ENCODE measurements at regions of chr2 and their contacts with region 1.

Region 1: DNA sequence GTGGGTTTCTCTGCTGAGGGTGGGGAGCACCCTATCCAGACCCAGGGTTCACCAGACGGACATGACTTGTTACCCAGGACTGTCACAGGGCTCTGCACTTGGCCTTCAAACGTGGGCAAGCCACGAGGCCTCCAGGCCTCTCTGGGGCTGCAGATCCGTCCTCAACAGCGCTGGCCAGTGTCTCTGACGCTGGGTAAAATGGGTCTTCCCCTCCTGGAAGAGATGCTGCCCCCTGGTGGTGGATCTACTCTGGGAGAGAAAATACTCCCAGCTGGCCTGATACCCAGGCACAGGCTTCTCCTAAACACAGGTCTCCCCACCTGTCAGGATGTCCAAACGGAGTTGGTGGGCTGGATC is 3.7 kb downstream of the GPR17 start:
- DNase-seq: peak; percentile 91
- ATAC-seq: peak; percentile 87
- H3K4me3 Mint-ChIP-seq: no peak overlapping the region
- H3K27ac Mint-ChIP-seq: peak overlapping the region; percentile 66
- H3K4me1 Mint-ChIP-seq: peaks cover 14% of the 10 kb centered on the region
- H3K27me3 Mint-ChIP-seq: no peaks in the 10 kb centered on the region
- CTCF ChIP-seq: peak; percentile 85

Region 2: GRCh38 chr2:127582863-127583861 is 66.5 kb before region 1 on chr2:
- CTCF ChIA-PET with region 1: interaction called, 11 read pairs
- POLR2A ChIA-PET with region 1: no interaction called
- intact Hi-C with region 1: no loop called
- DNase-seq: no peak
- ATAC-seq: no peak
- H3K4me3 Mint-ChIP-seq: no peak overlapping the region
- H3K27ac Mint-ChIP-seq: no peak overlapping the region
- H3K4me1 Mint-ChIP-seq: no peaks in the 10 kb centered on the region
- H3K27me3 Mint-ChIP-seq: no peaks in the 10 kb centered on the region
- CTCF ChIP-seq: no peak

Region 3: DNA sequence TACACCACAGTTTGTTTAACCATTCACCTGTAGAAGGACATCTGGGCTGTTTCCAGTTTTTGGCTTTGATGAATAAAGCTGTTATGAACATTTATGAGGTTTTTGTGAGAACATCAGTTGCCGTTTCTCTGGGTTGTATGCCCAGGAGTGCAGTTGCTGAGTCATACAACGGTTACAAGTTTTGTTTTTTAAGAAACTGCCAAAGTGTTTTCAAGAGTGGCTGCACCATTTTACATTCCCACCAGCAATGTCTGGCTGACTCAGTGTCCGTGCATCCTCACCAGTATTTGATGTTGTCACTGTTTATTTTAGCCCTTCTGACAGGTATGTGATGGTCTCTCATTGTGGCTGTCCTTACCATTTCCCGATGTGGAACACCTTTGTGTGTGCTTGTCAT is 51.7 kb before region 1 on chr2:
- CTCF ChIA-PET with region 1: interaction called, 114 read pairs
- POLR2A ChIA-PET with region 1: no interaction called
- intact Hi-C with region 1: no loop called
- DNase-seq: no peak
- ATAC-seq: no peak
- H3K4me3 Mint-ChIP-seq: no peak overlapping the region
- H3K27ac Mint-ChIP-seq: no peak overlapping the region
- H3K4me1 Mint-ChIP-seq: peaks cover 5% of the 10 kb centered on the region
- H3K27me3 Mint-ChIP-seq: peaks cover 1% of the 10 kb centered on the region
- CTCF ChIP-seq: no peak

Region 4: GRCh38 chr2:127625081-127625943 is 24.4 kb before region 1 on chr2:
- CTCF ChIA-PET with region 1: no interaction called
- POLR2A ChIA-PET with region 1: no interaction called
- intact Hi-C with region 1: no loop called
- DNase-seq: no peak
- ATAC-seq: no peak
- H3K4me3 Mint-ChIP-seq: no peak overlapping the region
- H3K27ac Mint-ChIP-seq: no peak overlapping the region
- H3K4me1 Mint-ChIP-seq: no peaks in the 10 kb centered on the region
- H3K27me3 Mint-ChIP-seq: no peaks in the 10 kb centered on the region
- CTCF ChIP-seq: no peak

Region 5: GRCh38 chr2:127637725-127638252 is 11.9 kb before region 1 on chr2:
- CTCF ChIA-PET with region 1: interaction called, 28 read pairs
- POLR2A ChIA-PET with region 1: interaction called, 3 read pairs
- intact Hi-C with region 1: no loop called
- DNase-seq: no peak
- ATAC-seq: no peak
- H3K4me3 Mint-ChIP-seq: peak overlapping the region; percentile 15
- H3K27ac Mint-ChIP-seq: peak overlapping the region; percentile 75
- H3K4me1 Mint-ChIP-seq: peaks cover 63% of the 10 kb centered on the region
- H3K27me3 Mint-ChIP-seq: no peaks in the 10 kb centered on the region
- CTCF ChIP-seq: no peak

Region 6: GRCh38 chr2:127688405-127688804 is 38.7 kb after region 1 on chr2:
- CTCF ChIA-PET with region 1: no interaction called
- POLR2A ChIA-PET with region 1: no interaction called
- intact Hi-C with region 1: no loop called
- DNase-seq: no peak
- ATAC-seq: no peak
- H3K4me3 Mint-ChIP-seq: no peak overlapping the region
- H3K27ac Mint-ChIP-seq: no peak overlapping the region
- H3K4me1 Mint-ChIP-seq: no peaks in the 10 kb centered on the region
- H3K27me3 Mint-ChIP-seq: no peaks in the 10 kb centered on the region
- CTCF ChIP-seq: no peak

Region 7: GRCh38 chr2:127735537-127736399 is 86.1 kb after region 1 on chr2:
- CTCF ChIA-PET with region 1: no interaction called
- POLR2A ChIA-PET with region 1: no interaction called
- intact Hi-C with region 1: no loop called
- DNase-seq: no peak
- ATAC-seq: no peak
- H3K4me3 Mint-ChIP-seq: no peak overlapping the region
- H3K27ac Mint-ChIP-seq: no peak overlapping the region
- H3K4me1 Mint-ChIP-seq: peaks cover 26% of the 10 kb centered on the region
- H3K27me3 Mint-ChIP-seq: no peaks in the 10 kb centered on the region
- CTCF ChIP-seq: no peak

Measured in activated CD8-positive, alpha-beta T cell treated with anti-CD3 and anti-CD28 coated beads for 36 hours (primary cell).